ENCODE measurements at regions of chr10 and their contacts with region 1.

Region 1: GRCh38 chr10:4883079-4883739 is 57.2 kb downstream of the AKR1E2 start:
- DNase-seq: peak; percentile 49
- ATAC-seq: peak in 1 of 2 donors; percentile 89

Region 2: GRCh38 chr10:4541292-4541691 is 341.9 kb before region 1 on chr10:
- intact Hi-C with region 1: no loop called
- DNase-seq: no peak
- ATAC-seq: peak in 1 of 2 donors; percentile 88

Region 3: GRCh38 chr10:4918236-4918635 is 35.0 kb after region 1 on chr10:
- intact Hi-C with region 1: loop called in 1 of 2 experiments (anchors 5 kb)
- DNase-seq: no peak
- ATAC-seq: no peak

Region 4: DNA sequence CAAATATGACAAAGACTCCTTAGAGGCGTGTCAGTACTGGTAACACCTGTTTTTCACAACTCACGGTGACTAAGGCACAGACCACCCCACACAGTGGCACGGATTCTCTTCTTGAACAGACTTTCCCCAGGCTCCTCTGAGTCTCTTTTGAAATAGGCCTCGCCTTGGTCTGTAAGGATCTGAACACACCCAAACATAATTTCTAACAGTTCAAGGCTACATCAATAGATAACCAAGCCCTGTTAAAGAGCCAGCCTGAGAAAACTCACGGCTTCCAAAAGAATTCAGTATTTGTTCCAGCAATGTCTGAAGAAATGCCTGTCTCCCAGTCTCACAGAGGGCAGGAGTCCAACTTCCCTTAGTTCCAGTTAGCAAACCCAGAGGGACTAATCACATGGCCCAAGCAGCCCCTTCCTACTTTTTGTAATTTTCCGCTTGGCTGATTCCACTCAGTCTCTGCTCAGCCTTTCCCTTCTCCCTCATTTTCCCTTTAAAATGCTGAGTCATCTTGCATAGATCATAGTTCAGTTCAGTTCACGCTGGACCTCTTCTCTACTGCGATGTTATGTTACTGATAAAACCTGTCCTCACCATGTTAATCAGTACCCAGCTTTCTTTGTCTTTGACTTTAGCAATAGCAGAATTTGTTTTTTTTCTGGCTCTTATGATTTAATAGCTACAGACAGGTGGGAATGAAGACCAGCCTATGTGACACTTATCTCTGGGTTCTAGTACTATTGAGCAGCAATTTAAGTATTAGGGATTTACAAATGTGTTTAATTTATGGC is 188.4 kb after region 1 on chr10:
- intact Hi-C with region 1: no loop called
- DNase-seq: peak; percentile 82
- ATAC-seq: peak; percentile 96

Region 5: DNA sequence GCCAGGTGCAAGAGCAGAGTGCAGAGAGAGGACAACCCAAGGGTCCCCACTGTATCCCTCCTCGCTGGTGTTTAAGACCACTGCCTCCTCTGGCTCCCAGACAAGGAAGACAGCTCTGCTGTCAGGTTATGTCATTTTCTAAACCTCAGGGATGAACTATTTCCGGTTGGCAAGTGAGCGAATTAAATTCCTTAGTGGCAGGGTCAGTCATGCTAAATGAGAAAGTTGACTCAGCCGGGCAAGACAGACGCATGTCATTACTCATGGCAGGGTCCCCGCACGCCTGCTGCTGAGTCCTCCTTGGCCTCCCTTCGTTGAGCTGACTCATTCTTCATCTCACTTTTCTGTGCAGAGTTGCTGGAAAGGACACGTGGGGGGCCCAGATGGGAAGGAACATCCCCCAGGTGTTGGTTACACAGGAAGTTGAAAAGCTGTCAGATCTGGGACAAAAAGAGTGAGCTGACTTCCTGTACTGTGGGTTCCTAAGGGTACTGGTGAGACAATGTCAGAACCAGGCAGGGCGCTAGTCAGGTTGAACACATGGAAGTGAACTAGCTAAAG is 434.4 kb after region 1 on chr10:
- intact Hi-C with region 1: no loop called
- DNase-seq: no peak
- ATAC-seq: no peak

Measured in left cardiac atrium (tissue), 4 donors.